Naive thymus-derived CD8-positive, alpha-beta T cell (primary cell): ENCODE measurements at regions of chr1 and their contacts with region 1.

Region 1: DNA sequence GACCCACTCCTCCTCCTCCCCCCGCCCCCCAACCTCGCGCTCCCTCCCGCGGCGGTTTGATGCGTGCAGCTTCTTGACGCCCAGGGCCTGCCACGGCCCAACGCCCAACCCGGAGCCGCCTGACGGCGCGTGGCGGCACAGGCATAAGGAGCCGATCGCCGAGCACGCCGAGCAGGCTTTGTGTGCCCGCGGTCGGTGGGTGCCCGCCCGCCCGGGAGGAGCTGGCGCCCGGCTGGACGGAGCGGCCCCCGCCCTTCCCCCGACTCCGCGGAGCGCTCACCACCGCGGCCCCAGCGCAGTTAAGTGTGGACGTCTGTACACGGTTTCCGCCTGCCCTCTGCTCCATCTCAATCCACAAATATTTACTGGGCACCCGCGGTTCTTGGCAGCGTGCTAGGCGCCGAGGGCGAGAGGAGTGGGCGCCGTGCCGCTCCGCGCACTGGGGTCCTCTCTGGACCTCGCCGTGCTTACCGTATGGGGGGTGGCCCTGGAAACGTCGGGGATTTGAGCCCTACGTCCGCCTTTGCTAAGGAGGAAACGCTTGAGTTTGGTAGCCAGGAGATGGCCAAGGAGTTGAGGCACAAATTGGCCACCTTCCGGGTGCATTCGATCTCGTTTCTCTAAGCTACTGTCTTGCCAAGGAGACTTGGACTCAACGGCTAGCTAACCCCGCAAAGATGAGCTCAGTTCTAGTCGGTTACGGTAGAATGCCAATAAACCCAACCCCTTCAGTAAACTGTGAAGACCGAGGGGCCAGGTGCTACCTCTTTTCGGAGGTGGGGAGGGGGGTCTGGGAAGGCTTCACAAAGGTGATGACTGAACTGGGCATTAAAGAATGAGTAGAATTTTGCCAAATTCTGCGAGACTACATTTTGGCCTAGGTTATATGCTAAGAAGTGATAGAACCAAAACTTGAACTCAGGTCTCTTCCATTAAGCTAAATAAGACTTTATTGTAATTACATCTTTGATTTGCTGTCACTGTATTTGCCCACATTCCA is 583 bp upstream of the HDGF start:
- DNase-seq: peak; percentile 85 to 98 (median 94)
- ATAC-seq: peak; percentile 78 to 86
- H3K4me3 Mint-ChIP-seq: peak overlapping the region; percentile 86 to 94 (median 90)
- H3K27ac Mint-ChIP-seq: peak overlapping the region; percentile 82 to 94 (median 94)
- H3K4me1 Mint-ChIP-seq: peaks cover 32 to 60% (median 50%) of the 10 kb centered on the region in 4 donors
- H3K27me3 Mint-ChIP-seq: no peaks in the 10 kb centered on the region

Region 2: GRCh38 chr1:156740679-156741612 is 11.1 kb before region 1 on chr1 and contains the start of gene MRPL24:
- POLR2A ChIA-PET with region 1: interaction called, 70 read pairs
- DNase-seq: peak; percentile 85 to 99 (median 96)
- ATAC-seq: peak; percentile 87 to 89
- H3K4me3 Mint-ChIP-seq: peak within 1 kb of the TSS; percentile 92 to 99 (median 96)
- H3K27ac Mint-ChIP-seq: peak within 1 kb of the TSS; percentile 94 to 99 (median 98)
- H3K4me1 Mint-ChIP-seq: peaks cover 18 to 47% (median 45%) of the 10 kb centered on the region in 4 donors
- H3K27me3 Mint-ChIP-seq: no peaks in the 10 kb centered on the region
- polyA plus RNA-seq, gene MRPL24: 98.6 to 109 (median 103) TPM

Region 3: GRCh38 chr1:156767101-156767878 is 15.2 kb after region 1 on chr1 and contains the start of gene PRCC:
- POLR2A ChIA-PET with region 1: interaction called, 57 read pairs
- DNase-seq: peak; percentile 83 to 99 (median 98)
- ATAC-seq: peak; percentile 92 to 93
- H3K4me3 Mint-ChIP-seq: no peak within 1 kb of the TSS
- H3K27ac Mint-ChIP-seq: peak within 1 kb of the TSS in 1 of 10 donors; percentile 71
- H3K4me1 Mint-ChIP-seq: peaks cover 25 to 40% (median 37%) of the 10 kb centered on the region in 4 donors
- H3K27me3 Mint-ChIP-seq: no peaks in the 10 kb centered on the region
- polyA plus RNA-seq, gene PRCC: 22.9 to 55.7 (median 39.9) TPM